ENCODE measurements at regions of chr10 and their contacts with region 1.

Region 1: DNA sequence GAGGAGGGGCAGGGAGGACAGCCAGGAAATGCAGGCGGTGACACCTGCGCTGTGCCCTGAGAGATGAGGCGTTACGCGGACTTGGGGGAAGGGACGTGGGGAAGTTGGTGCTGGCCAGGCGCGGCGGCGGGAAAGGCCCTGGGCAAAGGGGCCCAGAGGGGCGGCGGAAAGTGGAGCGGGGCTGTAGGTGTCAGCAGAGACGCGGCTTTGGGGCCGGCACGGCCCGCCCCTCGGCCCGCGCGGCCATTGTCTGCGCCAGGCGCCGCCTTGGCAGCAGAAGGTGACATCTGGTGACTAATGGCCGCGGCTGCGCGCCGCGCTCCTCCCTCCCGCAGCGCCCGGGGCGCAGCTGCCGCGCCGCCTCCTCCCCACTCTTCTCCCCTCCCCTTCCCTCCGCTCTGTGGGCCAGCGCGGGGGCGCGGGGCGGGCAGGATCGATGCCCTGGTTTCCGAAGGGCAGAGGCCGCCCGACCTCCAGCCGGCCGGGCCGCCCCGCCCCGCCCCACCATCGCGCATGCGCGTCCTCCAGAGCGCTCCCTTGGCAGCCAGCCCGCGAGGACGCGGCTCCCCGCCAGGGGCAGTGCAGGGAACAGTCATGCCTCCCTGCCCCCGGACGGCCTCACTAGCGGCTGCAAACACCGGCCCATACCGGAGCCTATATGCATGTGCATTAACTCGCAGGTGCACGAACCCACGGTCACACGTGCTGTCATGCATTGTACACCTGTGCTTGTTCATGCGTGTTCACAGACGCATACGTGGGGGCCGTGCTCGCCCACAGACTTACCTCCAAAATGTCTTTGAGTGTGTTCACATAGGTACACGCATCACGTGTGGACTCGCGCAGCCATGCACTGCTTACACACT is 269.6 kb downstream of the RPS24 start:
- DNase-seq: peak; percentile 89 to 98 (median 94)
- ATAC-seq: peak; percentile 92
- H3K4me3 ChIP-seq: peak overlapping the region; percentile 92
- H3K4me3 Mint-ChIP-seq: peak overlapping the region; percentile 90 to 99 (median 96)
- H3K27ac ChIP-seq: peak overlapping the region; percentile 87
- H3K27ac Mint-ChIP-seq: peak overlapping the region; percentile 94 to 99 (median 97)
- H3K4me1 ChIP-seq: peaks cover 10 to 11% of the 10 kb centered on the region in 2 donors
- H3K4me1 Mint-ChIP-seq: peaks cover 6 to 34% (median 19%) of the 10 kb centered on the region in 7 donors
- H3K27me3 ChIP-seq: no peaks in the 10 kb centered on the region
- H3K27me3 Mint-ChIP-seq: peaks cover 0 to 23% (median 0%) of the 10 kb centered on the region in 5 donors

Region 2: DNA sequence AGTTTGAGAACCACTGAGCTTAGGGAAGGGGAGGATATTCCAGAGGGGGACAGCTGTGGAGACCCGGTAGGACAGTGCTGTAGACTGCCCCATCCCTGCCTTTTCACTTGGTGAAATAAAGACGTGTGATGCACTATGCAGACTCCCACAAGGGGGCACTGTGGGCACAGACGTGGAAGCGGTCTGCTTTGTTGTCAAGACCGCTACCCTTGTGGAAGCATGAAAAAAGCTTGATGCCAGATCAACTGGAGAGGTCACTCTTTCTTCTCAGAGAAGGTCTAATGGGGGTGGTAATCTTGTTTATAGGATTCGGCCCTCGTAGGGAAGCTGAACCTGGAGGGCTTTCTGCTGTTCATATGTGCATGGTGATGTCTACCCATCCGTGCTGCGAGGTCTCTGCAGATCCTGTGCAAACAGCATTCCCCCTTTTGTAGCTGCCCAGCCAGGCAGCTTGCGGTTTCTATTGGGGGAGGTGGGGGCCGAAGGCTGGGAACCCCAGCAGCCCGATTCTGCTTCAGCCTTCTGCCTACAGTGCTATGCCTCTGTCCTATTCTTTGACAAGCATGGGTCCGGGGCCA is 255.8 kb before region 1 on chr10:
- CTCF ChIA-PET with region 1: interaction called, 4 read pairs
- POLR2A ChIA-PET with region 1: no interaction called
- intact Hi-C with region 1: loop called (anchors 5 kb)
- DNase-seq: peak; percentile 65 to 80 (median 74)
- ATAC-seq: peak; percentile 92
- H3K4me3 ChIP-seq: no peak overlapping the region
- H3K4me3 Mint-ChIP-seq: peak overlapping the region in 2 of 10 donors; percentile 11 to 27
- H3K27ac ChIP-seq: no peak overlapping the region
- H3K27ac Mint-ChIP-seq: peak overlapping the region in 2 of 9 donors; percentile 4 to 9
- H3K4me1 ChIP-seq: no peaks in the 10 kb centered on the region
- H3K4me1 Mint-ChIP-seq: peaks cover 5 to 26% (median 16%) of the 10 kb centered on the region in 7 donors
- H3K27me3 ChIP-seq: no peaks in the 10 kb centered on the region
- H3K27me3 Mint-ChIP-seq: no peaks in the 10 kb centered on the region

Region 3: DNA sequence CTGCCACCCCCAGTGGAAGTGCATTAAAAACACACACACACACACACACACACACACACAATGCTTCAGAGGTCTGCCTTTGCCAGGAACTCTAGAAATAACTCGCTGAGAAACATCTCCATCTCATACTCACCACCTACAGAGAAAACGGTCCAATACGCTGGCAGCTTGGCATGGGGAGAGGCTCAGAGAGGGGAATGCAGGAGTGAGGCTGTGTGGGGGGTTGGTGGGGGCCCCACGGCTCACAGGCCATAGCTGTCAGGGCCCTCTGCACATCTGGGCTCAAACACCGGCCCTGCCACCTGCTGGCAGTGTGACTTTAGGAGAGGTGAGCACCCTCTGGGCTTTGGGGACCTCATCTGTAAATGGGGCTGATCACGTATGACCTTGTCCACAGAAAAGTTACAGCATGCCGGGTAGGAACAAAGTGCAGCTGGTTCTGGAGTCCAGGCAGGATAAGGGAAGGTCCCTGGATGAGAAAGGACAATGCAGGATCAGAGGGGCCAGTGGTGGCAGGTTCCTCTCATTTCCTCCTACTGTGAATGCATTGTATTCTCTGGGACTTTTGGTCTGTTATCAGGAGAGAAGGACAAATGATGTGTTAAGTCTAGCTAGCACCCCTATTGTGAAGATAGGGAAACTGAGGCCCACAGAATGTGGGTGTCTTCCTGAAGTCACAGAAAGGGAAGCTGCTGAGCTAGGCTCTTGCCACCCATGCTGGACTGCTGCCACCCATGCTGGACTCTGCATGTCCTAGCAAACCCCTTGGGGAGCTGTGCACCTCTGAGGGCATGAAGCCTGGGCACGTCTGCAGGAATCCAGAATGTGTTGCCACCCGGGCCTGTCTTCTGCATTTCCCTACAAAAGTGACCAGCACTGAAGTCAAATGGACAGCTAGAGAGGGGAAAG is 135.0 kb after region 1 on chr10:
- CTCF ChIA-PET with region 1: no interaction called
- POLR2A ChIA-PET with region 1: no interaction called
- intact Hi-C with region 1: loop called in 1 of 2 experiments (anchors 1 kb)
- DNase-seq: peak in 3 of 9 donors; percentile 3 to 12 (median 6)
- ATAC-seq: no peak
- H3K4me3 ChIP-seq: no peak overlapping the region
- H3K4me3 Mint-ChIP-seq: peak overlapping the region in 1 of 10 donors; percentile 51
- H3K27ac ChIP-seq: no peak overlapping the region
- H3K27ac Mint-ChIP-seq: peak overlapping the region in 1 of 9 donors; percentile 12
- H3K4me1 ChIP-seq: no peaks in the 10 kb centered on the region
- H3K4me1 Mint-ChIP-seq: peaks cover 0 to 2% (median 0%) of the 10 kb centered on the region in 7 donors
- H3K27me3 ChIP-seq: no peaks in the 10 kb centered on the region
- H3K27me3 Mint-ChIP-seq: peaks cover 0 to 8% (median 4%) of the 10 kb centered on the region in 5 donors

Region 4: GRCh38 chr10:78972947-78973900 is 670.0 kb after region 1 on chr10:
- CTCF ChIA-PET with region 1: interaction called, 3 read pairs
- POLR2A ChIA-PET with region 1: no interaction called
- intact Hi-C with region 1: loop called (anchors 1 to 5 kb)
- DNase-seq: peak; percentile 24 to 83 (median 43)
- ATAC-seq: peak; percentile 72
- H3K4me3 ChIP-seq: peak overlapping the region; percentile 13
- H3K4me3 Mint-ChIP-seq: peak overlapping the region; percentile 72 to 89 (median 84)
- H3K27ac ChIP-seq: no peak overlapping the region
- H3K27ac Mint-ChIP-seq: peak overlapping the region in 7 of 9 donors; percentile 2 to 85 (median 66)
- H3K4me1 ChIP-seq: peaks cover 8 to 11% of the 10 kb centered on the region in 2 donors
- H3K4me1 Mint-ChIP-seq: peaks cover 15 to 28% (median 17%) of the 10 kb centered on the region in 7 donors
- H3K27me3 ChIP-seq: no peaks in the 10 kb centered on the region
- H3K27me3 Mint-ChIP-seq: peaks cover 0 to 8% (median 0%) of the 10 kb centered on the region in 5 donors

Region 5: GRCh38 chr10:79242620-79243152 is 939.5 kb after region 1 on chr10:
- CTCF ChIA-PET with region 1: no interaction called
- POLR2A ChIA-PET with region 1: no interaction called
- intact Hi-C with region 1: loop called (anchors 1 kb)
- DNase-seq: peak; percentile 6 to 71 (median 35)
- ATAC-seq: peak; percentile 39
- H3K4me3 ChIP-seq: peak overlapping the region; percentile 37
- H3K4me3 Mint-ChIP-seq: peak overlapping the region; percentile 43 to 87 (median 77)
- H3K27ac ChIP-seq: no peak overlapping the region
- H3K27ac Mint-ChIP-seq: peak overlapping the region in 1 of 9 donors; percentile 80
- H3K4me1 ChIP-seq: peaks cover 27 to 38% of the 10 kb centered on the region in 2 donors
- H3K4me1 Mint-ChIP-seq: peaks cover 39 to 58% (median 41%) of the 10 kb centered on the region in 7 donors
- H3K27me3 ChIP-seq: no peaks in the 10 kb centered on the region
- H3K27me3 Mint-ChIP-seq: no peaks in the 10 kb centered on the region

Region 6: GRCh38 chr10:80078448-80079311 is 1775.5 kb after region 1 on chr10 and contains the start of gene TMEM254:
- CTCF ChIA-PET with region 1: no interaction called
- POLR2A ChIA-PET with region 1: no interaction called
- intact Hi-C with region 1: loop called in 1 of 2 experiments (anchors 2 kb)
- DNase-seq: peak; percentile 79 to 87 (median 85)
- ATAC-seq: peak; percentile 87
- H3K4me3 ChIP-seq: peak within 1 kb of the TSS; percentile 88
- H3K4me3 Mint-ChIP-seq: peak within 1 kb of the TSS; percentile 90 to 100 (median 96)
- H3K27ac ChIP-seq: peak within 1 kb of the TSS; percentile 87
- H3K27ac Mint-ChIP-seq: peak within 1 kb of the TSS; percentile 88 to 99 (median 95)
- H3K4me1 ChIP-seq: peaks cover 6 to 12% of the 10 kb centered on the region in 2 donors
- H3K4me1 Mint-ChIP-seq: peaks cover 14 to 25% (median 20%) of the 10 kb centered on the region in 7 donors
- H3K27me3 ChIP-seq: no peaks in the 10 kb centered on the region
- H3K27me3 Mint-ChIP-seq: no peaks in the 10 kb centered on the region
- total RNA-seq, gene TMEM254: 7.3 to 19.6 (median 17.1) TPM

Measured in naive thymus-derived CD4-positive, alpha-beta T cell (primary cell).